Breast epithelium (tissue), 4 donors: ENCODE measurements at regions of chr2 and their contacts with region 1.

Region 1: GRCh38 chr2:20551260-20551944 is 99.5 kb downstream of the HS1BP3 start:
- DNase-seq: peak; percentile 53 to 76
- H3K4me3 ChIP-seq: no peak overlapping the region
- H3K27ac ChIP-seq: peak overlapping the region; percentile 34 to 35
- H3K4me1 ChIP-seq: no peaks in the 10 kb centered on the region
- H3K27me3 ChIP-seq: no peaks in the 10 kb centered on the region
- CTCF ChIP-seq: peak in 1 of 3 donors; percentile 35
- POLR2A ChIP-seq: no peak

Region 2: GRCh38 chr2:20516646-20517341 is 34.6 kb before region 1 on chr2:
- intact Hi-C with region 1: no loop called
- DNase-seq: peak in 1 of 2 donors; percentile 55
- H3K4me3 ChIP-seq: no peak overlapping the region
- H3K27ac ChIP-seq: peak overlapping the region; percentile 89 to 90
- H3K4me1 ChIP-seq: no peaks in the 10 kb centered on the region
- H3K27me3 ChIP-seq: no peaks in the 10 kb centered on the region
- CTCF ChIP-seq: no peak
- POLR2A ChIP-seq: no peak

Region 3: GRCh38 chr2:20617892-20618467 is 66.6 kb after region 1 on chr2:
- intact Hi-C with region 1: loop called (anchors 10 kb)
- DNase-seq: peak; percentile 84 to 95
- H3K4me3 ChIP-seq: peak overlapping the region in 1 of 3 donors; percentile 1
- H3K27ac ChIP-seq: peak overlapping the region; percentile 90 to 97
- H3K4me1 ChIP-seq: peaks cover 40 to 44% of the 10 kb centered on the region in 2 donors
- H3K27me3 ChIP-seq: no peaks in the 10 kb centered on the region
- CTCF ChIP-seq: peak; percentile 60 to 65 (median 64)
- POLR2A ChIP-seq: no peak